ENCODE measurements at regions of chr12 and their contacts with region 1.

Region 1: DNA sequence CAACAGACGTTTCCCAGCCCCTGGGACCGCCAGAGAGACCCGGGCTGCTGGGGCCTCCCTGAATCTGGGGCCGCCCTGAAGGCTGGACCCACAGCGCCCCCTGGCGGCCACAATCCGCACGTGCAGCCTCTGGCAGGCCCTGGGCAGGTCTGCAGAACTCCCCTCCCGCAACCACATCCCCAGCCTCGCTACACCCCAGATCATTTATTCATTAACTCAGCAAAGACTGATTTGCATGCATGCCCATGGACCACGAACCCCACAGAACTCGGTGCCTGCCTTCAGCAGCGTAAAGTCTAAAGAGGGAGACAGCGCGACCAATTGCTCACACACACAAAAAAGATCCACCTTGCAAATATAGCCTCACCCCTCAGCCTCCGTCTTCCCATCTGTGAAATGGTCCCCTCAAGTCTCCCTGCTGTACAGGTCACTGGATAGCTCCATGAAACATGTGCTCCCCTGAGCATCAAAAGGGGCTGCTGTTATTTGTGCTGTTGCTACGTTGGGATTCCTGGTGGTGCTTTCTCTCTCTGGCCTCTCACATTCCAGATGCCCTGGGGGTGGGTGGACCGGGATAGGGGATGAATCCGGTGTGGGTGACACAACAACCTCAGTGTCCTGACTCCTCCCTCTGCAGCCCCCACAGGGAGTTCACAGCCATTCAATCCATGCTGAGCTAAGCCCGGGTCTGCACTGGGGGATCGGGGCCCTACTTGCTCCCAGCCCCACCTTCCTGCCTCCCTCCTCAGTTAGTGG is 96.4 kb downstream of the SCARB1 start:
- DNase-seq: peak; percentile 67
- ATAC-seq: peak; percentile 85
- H3K4me3 ChIP-seq: no peak overlapping the region
- H3K27ac ChIP-seq: 0 out of 2 replicates have a peak overlapping the region, but pooled peaks have one; percentile 7
- H3K4me1 ChIP-seq: peaks cover 30% of the 10 kb centered on the region
- H3K27me3 ChIP-seq: no peaks in the 10 kb centered on the region
- CTCF ChIP-seq: peak; percentile 96 to 98 (median 97); a peak in 5 of 6 replicates
- EP300 ChIP-seq: 0 out of 4 replicates have a peak, but pooled peaks of 1 of the 2 experiments have one; percentile 20
- POLR2A ChIP-seq: no peak
- RAD21 ChIP-seq: peak; percentile 94

Region 2: DNA sequence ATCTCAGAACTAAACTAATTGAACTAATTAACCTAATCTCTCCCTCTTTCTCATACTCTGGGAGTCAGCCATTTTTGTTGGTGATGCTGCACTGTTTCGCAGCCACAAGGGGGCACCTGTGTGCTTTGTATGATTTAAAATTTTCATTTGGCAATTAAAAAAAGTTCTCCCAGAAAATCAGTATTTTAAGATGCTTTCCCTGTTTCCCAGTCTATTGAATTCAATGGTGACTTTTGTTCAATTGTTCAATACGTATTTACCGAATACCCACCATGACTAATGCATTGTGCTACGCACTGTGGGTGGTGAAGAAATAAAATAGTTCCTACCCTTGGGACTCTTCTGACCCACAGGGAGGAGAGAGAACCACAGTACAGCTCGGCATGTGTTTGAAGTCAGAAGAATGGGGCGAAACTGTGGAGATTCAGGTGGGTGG is 730.6 kb before region 1 on chr12:
- CTCF ChIA-PET with region 1: interaction called, 116 read pairs
- POLR2A ChIA-PET with region 1: no interaction called
- RAD21 ChIA-PET with region 1: interaction called, 24 read pairs
- SMC1A ChIA-PET with region 1: interaction called, 37 read pairs
- in situ Hi-C with region 1: loop called (anchors 5 kb)
- intact Hi-C with region 1: loop called (anchors 1 kb)
- DNase-seq: peak; percentile 27
- ATAC-seq: peak; percentile 80
- H3K4me3 ChIP-seq: no peak overlapping the region
- H3K27ac ChIP-seq: no peak overlapping the region
- H3K4me1 ChIP-seq: no peaks in the 10 kb centered on the region
- H3K27me3 ChIP-seq: no peaks in the 10 kb centered on the region
- CTCF ChIP-seq: peak; percentile 80 to 89 (median 84)
- EP300 ChIP-seq: no peak
- POLR2A ChIP-seq: no peak
- RAD21 ChIP-seq: peak; percentile 92

Region 3: GRCh38 chr12:124369055-124369900 is 398.0 kb before region 1 on chr12:
- CTCF ChIA-PET with region 1: no interaction called
- POLR2A ChIA-PET with region 1: no interaction called
- RAD21 ChIA-PET with region 1: no interaction called
- SMC1A ChIA-PET with region 1: no interaction called
- in situ Hi-C with region 1: loop called (anchors 25 kb)
- intact Hi-C with region 1: no loop called
- DNase-seq: no peak
- ATAC-seq: no peak
- H3K4me3 ChIP-seq: no peak overlapping the region
- H3K27ac ChIP-seq: no peak overlapping the region
- H3K4me1 ChIP-seq: no peaks in the 10 kb centered on the region
- H3K27me3 ChIP-seq: no peaks in the 10 kb centered on the region
- CTCF ChIP-seq: no peak
- EP300 ChIP-seq: no peak
- POLR2A ChIP-seq: no peak
- RAD21 ChIP-seq: no peak

Region 4: GRCh38 chr12:124545508-124546418 is 221.5 kb before region 1 on chr12:
- CTCF ChIA-PET with region 1: interaction called, 3 read pairs
- POLR2A ChIA-PET with region 1: interaction called, 4 read pairs
- RAD21 ChIA-PET with region 1: interaction called, 3 read pairs
- SMC1A ChIA-PET with region 1: interaction called, 3 read pairs
- in situ Hi-C with region 1: no loop called
- intact Hi-C with region 1: loop called (anchors 5 kb)
- DNase-seq: peak; percentile 76
- ATAC-seq: peak; percentile 95
- H3K4me3 ChIP-seq: peak overlapping the region; percentile 59
- H3K27ac ChIP-seq: peak overlapping the region; percentile 90
- H3K4me1 ChIP-seq: peaks cover 70% of the 10 kb centered on the region
- H3K27me3 ChIP-seq: no peaks in the 10 kb centered on the region
- CTCF ChIP-seq: no peak
- EP300 ChIP-seq: peak; percentile 61 to 72; a peak in 3 of 4 replicates
- POLR2A ChIP-seq: peak; percentile 37; the same call in 1 of the 2 replicates
- RAD21 ChIP-seq: no peak

Region 5: DNA sequence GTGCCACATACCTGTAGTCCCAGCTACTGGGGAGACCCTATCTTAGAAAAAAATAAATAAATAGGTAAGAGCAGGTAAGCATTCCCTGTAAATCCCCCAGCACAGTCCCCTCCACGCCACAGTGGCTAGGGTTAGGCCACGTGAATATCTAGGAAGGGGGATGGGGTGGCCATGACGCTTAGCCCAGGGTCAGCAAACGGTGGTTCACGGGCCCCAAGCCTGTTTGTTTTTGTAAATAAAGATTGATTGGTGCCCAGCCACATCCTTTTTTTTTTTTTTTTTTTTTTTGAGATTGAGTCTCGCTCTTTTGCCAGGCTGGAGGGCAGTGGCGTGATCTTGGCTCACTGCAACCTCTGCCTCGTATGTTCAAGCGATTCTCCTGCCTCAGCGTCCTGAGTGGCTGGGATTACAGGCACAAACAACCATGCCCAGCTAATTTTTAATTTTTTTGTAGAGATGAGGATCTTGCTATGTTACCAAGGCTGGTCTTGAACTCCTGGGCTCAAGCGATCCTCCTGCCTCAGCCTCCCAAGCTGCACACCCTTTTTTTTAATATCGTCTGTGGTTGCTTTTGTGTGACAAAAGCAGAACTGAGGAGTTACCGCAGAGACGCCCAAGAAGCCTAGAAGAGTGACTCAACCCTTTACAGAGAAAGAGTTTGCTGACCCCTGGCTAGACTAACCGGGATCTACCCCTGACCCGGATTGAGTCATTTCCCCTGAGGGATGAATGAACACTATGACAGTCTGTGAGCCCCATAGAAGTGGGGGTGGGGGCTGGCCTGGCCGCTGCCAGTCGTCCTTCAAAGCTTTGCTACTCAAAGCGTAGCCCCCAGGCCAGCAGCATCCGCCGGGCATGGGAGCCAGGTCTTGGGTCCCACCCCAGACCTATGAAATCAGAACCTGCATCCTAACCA is 86.1 kb before region 1 on chr12:
- CTCF ChIA-PET with region 1: interaction called, 6 read pairs
- POLR2A ChIA-PET with region 1: interaction called, 5 read pairs
- RAD21 ChIA-PET with region 1: no interaction called
- SMC1A ChIA-PET with region 1: no interaction called
- in situ Hi-C with region 1: no loop called
- intact Hi-C with region 1: loop called (anchors 2 kb)
- DNase-seq: peak; percentile 71
- ATAC-seq: peak; percentile 94
- H3K4me3 ChIP-seq: no peak overlapping the region
- H3K27ac ChIP-seq: no peak overlapping the region
- H3K4me1 ChIP-seq: peaks cover 18% of the 10 kb centered on the region
- H3K27me3 ChIP-seq: 0 out of 4 replicates have a peak, but pooled peaks cover 0 to 3% of the 10 kb centered on the region in 2 experiments
- CTCF ChIP-seq: peak; percentile 37 to 67 (median 53); a peak in 5 of 6 replicates
- EP300 ChIP-seq: peak; percentile 44 to 82; a peak in 2 of 4 replicates
- POLR2A ChIP-seq: no peak
- RAD21 ChIP-seq: peak; percentile 75

Region 6: GRCh38 chr12:124906606-124907261 is 139.5 kb after region 1 on chr12:
- CTCF ChIA-PET with region 1: interaction called, 61 read pairs
- POLR2A ChIA-PET with region 1: interaction called, 4 read pairs
- RAD21 ChIA-PET with region 1: interaction called, 13 read pairs
- SMC1A ChIA-PET with region 1: interaction called, 4 read pairs
- in situ Hi-C with region 1: no loop called
- intact Hi-C with region 1: no loop called
- DNase-seq: peak; percentile 87
- ATAC-seq: peak; percentile 59
- H3K4me3 ChIP-seq: no peak overlapping the region
- H3K27ac ChIP-seq: peak overlapping the region; percentile 47
- H3K4me1 ChIP-seq: peaks cover 34% of the 10 kb centered on the region
- H3K27me3 ChIP-seq: no peaks in the 10 kb centered on the region
- CTCF ChIP-seq: peak; percentile 91 to 100 (median 99); a peak in 5 of 6 replicates
- EP300 ChIP-seq: no peak
- POLR2A ChIP-seq: no peak
- RAD21 ChIP-seq: peak; percentile 98

Region 7: GRCh38 chr12:124967016-124967739 is 199.9 kb after region 1 on chr12:
- CTCF ChIA-PET with region 1: no interaction called
- POLR2A ChIA-PET with region 1: no interaction called
- RAD21 ChIA-PET with region 1: no interaction called
- SMC1A ChIA-PET with region 1: no interaction called
- in situ Hi-C with region 1: no loop called
- intact Hi-C with region 1: no loop called
- DNase-seq: no peak
- ATAC-seq: no peak
- H3K4me3 ChIP-seq: no peak overlapping the region
- H3K27ac ChIP-seq: no peak overlapping the region
- H3K4me1 ChIP-seq: no peaks in the 10 kb centered on the region
- H3K27me3 ChIP-seq: no peaks in the 10 kb centered on the region
- CTCF ChIP-seq: no peak
- EP300 ChIP-seq: no peak
- POLR2A ChIP-seq: 0 out of 2 replicates have a peak, but pooled peaks have one; percentile 6
- RAD21 ChIP-seq: no peak

Region 8: GRCh38 chr12:125029761-125030358 is 262.6 kb after region 1 on chr12:
- CTCF ChIA-PET with region 1: no interaction called
- POLR2A ChIA-PET with region 1: no interaction called
- RAD21 ChIA-PET with region 1: no interaction called
- SMC1A ChIA-PET with region 1: no interaction called
- in situ Hi-C with region 1: no loop called
- intact Hi-C with region 1: no loop called
- DNase-seq: no peak
- ATAC-seq: peak; percentile 42
- H3K4me3 ChIP-seq: no peak overlapping the region
- H3K27ac ChIP-seq: no peak overlapping the region
- H3K4me1 ChIP-seq: no peaks in the 10 kb centered on the region
- H3K27me3 ChIP-seq: no peaks in the 10 kb centered on the region
- CTCF ChIP-seq: no peak
- EP300 ChIP-seq: no peak
- POLR2A ChIP-seq: no peak
- RAD21 ChIP-seq: no peak

Region 9: GRCh38 chr12:125053821-125054220 is 286.6 kb after region 1 on chr12:
- CTCF ChIA-PET with region 1: no interaction called
- POLR2A ChIA-PET with region 1: no interaction called
- RAD21 ChIA-PET with region 1: no interaction called
- SMC1A ChIA-PET with region 1: no interaction called
- in situ Hi-C with region 1: no loop called
- intact Hi-C with region 1: no loop called
- DNase-seq: no peak
- ATAC-seq: no peak
- H3K4me3 ChIP-seq: no peak overlapping the region
- H3K27ac ChIP-seq: no peak overlapping the region
- H3K4me1 ChIP-seq: no peaks in the 10 kb centered on the region
- H3K27me3 ChIP-seq: no peaks in the 10 kb centered on the region
- CTCF ChIP-seq: no peak
- EP300 ChIP-seq: no peak
- POLR2A ChIP-seq: no peak
- RAD21 ChIP-seq: no peak

Measured in GM12878 (cell line).